ENCODE measurements at regions of chr12 and their contacts with region 1.

Region 1: GRCh38 chr12:55940065-55940732 is 9.2 kb downstream of the DGKA start:
- DNase-seq: peak; percentile 85 to 90
- H3K4me3 ChIP-seq: peak overlapping the region; percentile 24 to 36
- H3K27ac ChIP-seq: peak overlapping the region; percentile 37 to 48
- H3K4me1 ChIP-seq: peaks cover 0 to 7% (median 5%) of the 10 kb centered on the region in 4 donors
- H3K27me3 ChIP-seq: no peaks in the 10 kb centered on the region
- CTCF ChIP-seq: peak; percentile 84 to 85

Region 2: DNA sequence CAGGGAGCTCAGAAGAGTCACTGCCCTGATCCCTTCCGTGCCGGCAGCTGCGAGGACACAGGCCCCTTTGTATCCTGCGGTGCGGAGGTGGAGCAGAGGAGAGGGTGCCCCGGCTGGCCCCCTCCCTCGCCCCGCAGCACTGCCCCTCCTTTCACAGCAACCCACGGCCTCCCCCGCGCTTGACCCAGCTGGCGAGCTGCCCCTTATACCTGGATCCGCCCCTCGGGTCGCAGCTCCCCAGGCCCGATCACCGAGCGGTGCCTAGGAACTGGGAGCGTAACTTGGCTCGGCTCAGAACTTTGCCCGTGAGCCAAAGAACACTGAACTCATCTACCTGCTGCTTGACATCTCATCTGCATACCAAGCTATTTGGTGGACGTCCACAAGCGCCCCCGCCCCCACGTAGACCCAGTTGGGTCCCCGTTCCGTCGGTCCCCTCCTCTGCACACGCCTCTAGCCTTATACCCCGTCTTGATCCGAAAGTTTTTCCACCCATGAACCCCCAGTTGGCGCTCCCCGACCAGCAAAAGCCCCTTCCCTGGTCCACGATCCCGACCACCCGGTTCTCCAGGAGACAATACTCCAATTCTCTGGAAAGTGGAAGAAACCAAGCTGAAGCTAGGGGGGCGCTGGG is 110.1 kb before region 1 on chr12:
- intact Hi-C with region 1: loop called (anchors 5 kb)
- DNase-seq: peak; percentile 45 to 77
- H3K4me3 ChIP-seq: peak overlapping the region; percentile 82 to 90
- H3K27ac ChIP-seq: peak overlapping the region; percentile 86 to 88
- H3K4me1 ChIP-seq: peaks cover 0 to 54% (median 39%) of the 10 kb centered on the region in 4 donors
- H3K27me3 ChIP-seq: no peaks in the 10 kb centered on the region
- CTCF ChIP-seq: no peak

Region 3: DNA sequence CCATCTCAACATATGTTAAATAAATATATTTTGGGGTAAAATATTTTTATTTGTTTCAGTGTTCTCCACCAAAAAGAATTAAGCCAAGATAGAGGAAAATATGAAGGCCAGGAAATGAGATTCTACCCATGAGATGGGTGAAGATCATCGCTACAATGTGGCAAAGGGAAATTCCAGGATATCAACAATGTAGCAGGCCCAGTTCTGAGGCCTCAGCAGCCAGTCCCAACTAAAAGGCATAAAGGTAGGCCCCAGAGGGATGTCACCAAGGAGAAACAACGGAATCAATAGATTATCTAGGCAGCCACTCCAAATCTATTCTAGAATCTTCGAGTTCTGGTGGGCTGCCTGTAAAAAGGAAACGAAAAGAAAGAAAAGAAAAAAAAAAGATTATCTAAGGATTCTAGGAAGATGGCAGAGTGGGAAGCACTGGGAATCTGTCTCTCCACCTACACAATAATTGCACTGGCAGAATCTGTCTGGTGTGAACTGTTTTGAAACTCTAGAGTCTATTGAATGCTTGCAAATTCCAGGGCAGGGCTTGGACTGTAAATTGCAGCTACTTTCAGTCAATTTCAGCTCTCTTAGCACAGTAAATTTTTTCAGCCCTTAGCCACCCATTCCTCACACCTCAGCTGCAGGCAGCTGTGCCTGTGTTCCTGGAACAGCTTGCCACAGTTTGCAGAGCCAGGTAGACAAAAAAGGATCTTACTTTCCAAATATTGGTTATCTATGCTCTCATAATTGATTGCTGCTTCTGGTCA is 64.3 kb before region 1 on chr12:
- intact Hi-C with region 1: no loop called
- DNase-seq: no peak
- H3K4me3 ChIP-seq: no peak overlapping the region
- H3K27ac ChIP-seq: no peak overlapping the region
- H3K4me1 ChIP-seq: no peaks in the 10 kb centered on the region
- H3K27me3 ChIP-seq: no peaks in the 10 kb centered on the region
- CTCF ChIP-seq: no peak

Region 4: GRCh38 chr12:56657416-56658379 is 717.5 kb after region 1 on chr12:
- intact Hi-C with region 1: no loop called
- DNase-seq: peak in 1 of 2 donors; percentile 24
- H3K4me3 ChIP-seq: no peak overlapping the region
- H3K27ac ChIP-seq: no peak overlapping the region
- H3K4me1 ChIP-seq: no peaks in the 10 kb centered on the region
- H3K27me3 ChIP-seq: no peaks in the 10 kb centered on the region
- CTCF ChIP-seq: no peak

Measured in tibial artery (tissue), 4 donors.